Calu3 (cell line): ENCODE measurements at regions of chr1 and their contacts with region 1.

Region 1: DNA sequence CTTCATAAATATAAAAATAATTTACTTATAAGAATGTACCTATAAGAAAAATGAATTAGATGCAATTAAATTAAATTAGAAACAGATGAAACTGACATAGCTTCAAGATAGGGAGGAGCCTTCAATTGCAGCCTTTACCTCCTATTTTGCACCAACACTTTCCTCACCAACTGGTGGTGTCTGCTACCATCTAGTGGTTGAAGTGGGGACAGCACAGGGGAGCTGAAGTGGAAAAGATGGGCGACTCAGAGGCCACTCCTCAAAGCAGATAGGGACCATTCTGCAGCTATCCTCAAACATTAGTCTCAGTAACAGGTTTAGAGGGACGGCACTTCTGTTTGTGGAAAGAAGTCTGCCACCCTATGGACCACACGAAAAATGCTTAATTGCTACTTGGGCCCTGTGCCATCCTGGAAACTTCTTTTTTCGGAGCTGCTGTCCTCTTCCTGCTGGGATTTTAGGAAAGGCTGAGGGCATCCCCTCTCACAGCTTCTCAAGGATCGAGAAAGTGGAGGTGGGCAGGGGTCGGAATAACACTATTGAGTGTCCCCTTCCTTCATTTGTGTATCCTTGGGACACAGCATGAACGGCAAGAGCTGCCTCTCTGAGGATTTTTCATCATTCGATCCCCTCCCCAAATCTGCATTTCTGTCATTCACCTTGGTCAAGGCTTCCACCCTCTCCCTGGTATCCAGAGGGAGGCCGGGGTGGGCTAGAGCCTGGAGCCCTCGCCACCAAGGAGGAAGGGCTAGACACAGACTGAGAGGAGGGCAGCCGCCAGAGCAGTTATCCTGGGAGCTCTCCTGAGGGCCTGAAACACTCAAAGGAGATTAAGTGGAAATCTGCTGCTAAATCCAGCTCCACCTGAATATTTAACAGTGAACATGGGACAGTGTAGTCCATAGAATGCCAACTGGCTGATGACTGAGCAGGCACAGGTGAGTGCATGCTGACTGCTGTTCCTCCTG is 9.6 kb downstream of the PROK1 start:
- DNase-seq: peak; percentile 77
- H3K4me3 Mint-ChIP-seq: no peak overlapping the region
- H3K27ac Mint-ChIP-seq: no peak overlapping the region
- H3K4me1 Mint-ChIP-seq: peaks cover 24% of the 10 kb centered on the region
- H3K27me3 Mint-ChIP-seq: peaks cover 23% of the 10 kb centered on the region
- CTCF ChIP-seq: peak; percentile 70

Region 2: GRCh38 chr1:110203021-110203661 is 257.4 kb before region 1 on chr1:
- CTCF ChIA-PET with region 1: interaction called, 27 read pairs
- intact Hi-C with region 1: loop called (anchors 1 kb)
- DNase-seq: peak; percentile 70
- H3K4me3 Mint-ChIP-seq: no peak overlapping the region
- H3K27ac Mint-ChIP-seq: no peak overlapping the region
- H3K4me1 Mint-ChIP-seq: no peaks in the 10 kb centered on the region
- H3K27me3 Mint-ChIP-seq: peaks cover 8% of the 10 kb centered on the region
- CTCF ChIP-seq: peak; percentile 65

Region 3: GRCh38 chr1:110312188-110313121 is 148.1 kb before region 1 on chr1:
- CTCF ChIA-PET with region 1: interaction called, 10 read pairs
- intact Hi-C with region 1: loop called (anchors 5 kb)
- DNase-seq: peak; percentile 78
- H3K4me3 Mint-ChIP-seq: no peak overlapping the region
- H3K27ac Mint-ChIP-seq: no peak overlapping the region
- H3K4me1 Mint-ChIP-seq: peaks cover 19% of the 10 kb centered on the region
- H3K27me3 Mint-ChIP-seq: no peaks in the 10 kb centered on the region
- CTCF ChIP-seq: peak; percentile 75

Region 4: GRCh38 chr1:110477041-110477440 is 16.5 kb after region 1 on chr1:
- CTCF ChIA-PET with region 1: interaction called, 15 read pairs
- intact Hi-C with region 1: no loop called
- DNase-seq: peak; percentile 8
- H3K4me3 Mint-ChIP-seq: peak overlapping the region; percentile 33
- H3K27ac Mint-ChIP-seq: peak overlapping the region; percentile 66
- H3K4me1 Mint-ChIP-seq: peaks cover 46% of the 10 kb centered on the region
- H3K27me3 Mint-ChIP-seq: no peaks in the 10 kb centered on the region
- CTCF ChIP-seq: no peak